Natural killer cell (primary cell): ENCODE measurements at regions of chr13 and their contacts with region 1.

Region 1: GRCh38 chr13:44577236-44578066 is 1.3 kb upstream of the TSC22D1 start:
- DNase-seq: peak; percentile 91 to 99
- ATAC-seq: peak; percentile 74 to 89 (median 76)
- H3K4me3 ChIP-seq: peak overlapping the region; percentile 87
- H3K4me3 Mint-ChIP-seq: peak overlapping the region; percentile 94
- H3K27ac ChIP-seq: peak overlapping the region; percentile 98
- H3K27ac Mint-ChIP-seq: peak overlapping the region; percentile 89 to 95
- H3K4me1 ChIP-seq: peaks cover 26% of the 10 kb centered on the region
- H3K4me1 Mint-ChIP-seq: peaks cover 33 to 43% of the 10 kb centered on the region in 2 donors
- H3K27me3 ChIP-seq: no peaks in the 10 kb centered on the region
- H3K27me3 Mint-ChIP-seq: no peaks in the 10 kb centered on the region
- CTCF ChIP-seq: no peak

Region 2: GRCh38 chr13:42991892-42992763 is 1585.3 kb before region 1 on chr13 and contains the start of gene EPSTI1:
- intact Hi-C with region 1: loop called (anchors 10 kb)
- DNase-seq: peak; percentile 68 to 87
- ATAC-seq: peak; percentile 86 to 91 (median 88)
- H3K4me3 ChIP-seq: peak within 1 kb of the TSS; percentile 92
- H3K4me3 Mint-ChIP-seq: peak within 1 kb of the TSS; percentile 95
- H3K27ac ChIP-seq: peak within 1 kb of the TSS; percentile 98
- H3K27ac Mint-ChIP-seq: peak within 1 kb of the TSS; percentile 98 to 99
- H3K4me1 ChIP-seq: peaks cover 23% of the 10 kb centered on the region
- H3K4me1 Mint-ChIP-seq: peaks cover 33 to 34% of the 10 kb centered on the region in 2 donors
- H3K27me3 ChIP-seq: no peaks in the 10 kb centered on the region
- H3K27me3 Mint-ChIP-seq: no peaks in the 10 kb centered on the region
- CTCF ChIP-seq: no peak
- total RNA-seq, gene EPSTI1: 23.4 to 57.4 (median 34.4) TPM

Region 3: GRCh38 chr13:44484562-44485138 is 92.8 kb before region 1 on chr13:
- intact Hi-C with region 1: loop called (anchors 5 kb)
- DNase-seq: peak in 1 of 2 donors; percentile 20
- ATAC-seq: peak in 1 of 3 donors; percentile 47
- H3K4me3 ChIP-seq: no peak overlapping the region
- H3K4me3 Mint-ChIP-seq: peak overlapping the region; percentile 63
- H3K27ac ChIP-seq: no peak overlapping the region
- H3K27ac Mint-ChIP-seq: peak overlapping the region; percentile 61 to 78
- H3K4me1 ChIP-seq: no peaks in the 10 kb centered on the region
- H3K4me1 Mint-ChIP-seq: peaks cover 13 to 15% of the 10 kb centered on the region in 2 donors
- H3K27me3 ChIP-seq: no peaks in the 10 kb centered on the region
- H3K27me3 Mint-ChIP-seq: no peaks in the 10 kb centered on the region
- CTCF ChIP-seq: no peak

Region 4: DNA sequence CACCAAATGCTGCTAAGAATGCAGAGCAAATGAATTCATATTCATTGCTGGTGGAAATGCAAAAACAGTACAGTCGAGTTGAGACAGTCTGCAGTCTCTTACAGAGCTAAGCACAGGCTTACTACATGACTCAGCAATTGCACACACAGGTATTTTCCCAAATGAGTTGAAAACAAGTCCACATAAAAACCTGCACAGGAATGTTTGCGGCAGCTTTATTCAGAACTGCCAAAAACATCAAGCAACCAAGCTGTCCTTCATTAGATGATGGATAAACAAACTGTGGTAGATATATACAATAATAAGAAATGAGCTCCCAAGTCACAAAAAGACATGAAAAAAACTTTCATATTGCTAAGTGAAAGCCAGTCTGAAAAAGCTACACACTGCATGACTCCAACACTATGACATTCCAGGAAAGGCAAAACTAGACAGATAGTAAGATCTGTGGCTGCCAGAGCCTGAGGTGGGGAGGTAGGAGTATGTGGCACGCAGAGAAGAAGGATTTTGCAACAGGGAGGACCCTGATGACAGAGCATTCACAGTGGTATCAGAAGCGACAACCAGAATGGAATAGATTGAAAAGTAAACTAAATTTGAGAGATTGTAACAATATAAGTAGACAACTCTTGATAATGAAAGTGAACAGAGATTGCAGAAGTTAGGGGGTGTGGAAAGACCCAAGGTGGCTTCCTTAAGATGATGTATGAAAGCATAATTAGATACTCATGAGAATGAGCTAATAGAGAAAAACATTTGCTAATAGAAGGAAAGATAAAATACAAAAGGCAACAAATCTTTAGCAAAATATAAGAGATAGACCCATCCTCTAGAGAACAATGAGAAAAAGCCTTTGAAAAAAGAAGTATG is 54.1 kb before region 1 on chr13:
- intact Hi-C with region 1: no loop called
- DNase-seq: no peak
- ATAC-seq: no peak
- H3K4me3 ChIP-seq: no peak overlapping the region
- H3K4me3 Mint-ChIP-seq: no peak overlapping the region
- H3K27ac ChIP-seq: no peak overlapping the region
- H3K27ac Mint-ChIP-seq: no peak overlapping the region
- H3K4me1 ChIP-seq: no peaks in the 10 kb centered on the region
- H3K4me1 Mint-ChIP-seq: peaks cover 0 to 6% of the 10 kb centered on the region in 2 donors
- H3K27me3 ChIP-seq: no peaks in the 10 kb centered on the region
- H3K27me3 Mint-ChIP-seq: no peaks in the 10 kb centered on the region
- CTCF ChIP-seq: no peak

Region 5: GRCh38 chr13:44540761-44541434 is 36.6 kb before region 1 on chr13:
- intact Hi-C with region 1: no loop called
- DNase-seq: no peak
- ATAC-seq: no peak
- H3K4me3 ChIP-seq: no peak overlapping the region
- H3K4me3 Mint-ChIP-seq: no peak overlapping the region
- H3K27ac ChIP-seq: no peak overlapping the region
- H3K27ac Mint-ChIP-seq: no peak overlapping the region
- H3K4me1 ChIP-seq: no peaks in the 10 kb centered on the region
- H3K4me1 Mint-ChIP-seq: no peaks in the 10 kb centered on the region
- H3K27me3 ChIP-seq: no peaks in the 10 kb centered on the region
- H3K27me3 Mint-ChIP-seq: no peaks in the 10 kb centered on the region
- CTCF ChIP-seq: no peak

Region 6: GRCh38 chr13:44591316-44591715 is 13.9 kb after region 1 on chr13:
- intact Hi-C with region 1: loop called (anchors 2 kb)
- DNase-seq: no peak
- ATAC-seq: no peak
- H3K4me3 ChIP-seq: no peak overlapping the region
- H3K4me3 Mint-ChIP-seq: no peak overlapping the region
- H3K27ac ChIP-seq: no peak overlapping the region
- H3K27ac Mint-ChIP-seq: no peak overlapping the region
- H3K4me1 ChIP-seq: peaks cover 10% of the 10 kb centered on the region
- H3K4me1 Mint-ChIP-seq: peaks cover 16 to 23% of the 10 kb centered on the region in 2 donors
- H3K27me3 ChIP-seq: peaks cover 5% of the 10 kb centered on the region
- H3K27me3 Mint-ChIP-seq: peaks cover 18 to 26% of the 10 kb centered on the region in 2 donors
- CTCF ChIP-seq: no peak

Region 7: GRCh38 chr13:44917589-44918325 is 340.3 kb after region 1 on chr13:
- intact Hi-C with region 1: loop called (anchors 2 kb)
- DNase-seq: peak; percentile 98 to 100
- ATAC-seq: peak; percentile 71 to 88 (median 77)
- H3K4me3 ChIP-seq: peak overlapping the region; percentile 72
- H3K4me3 Mint-ChIP-seq: no peak overlapping the region
- H3K27ac ChIP-seq: peak overlapping the region; percentile 84
- H3K27ac Mint-ChIP-seq: no peak overlapping the region
- H3K4me1 ChIP-seq: peaks cover 18% of the 10 kb centered on the region
- H3K4me1 Mint-ChIP-seq: no peaks in the 10 kb centered on the region
- H3K27me3 ChIP-seq: no peaks in the 10 kb centered on the region
- H3K27me3 Mint-ChIP-seq: no peaks in the 10 kb centered on the region
- CTCF ChIP-seq: no peak